B cell (primary cell): ENCODE measurements at regions of chr13 and their contacts with region 1.

Region 1: DNA sequence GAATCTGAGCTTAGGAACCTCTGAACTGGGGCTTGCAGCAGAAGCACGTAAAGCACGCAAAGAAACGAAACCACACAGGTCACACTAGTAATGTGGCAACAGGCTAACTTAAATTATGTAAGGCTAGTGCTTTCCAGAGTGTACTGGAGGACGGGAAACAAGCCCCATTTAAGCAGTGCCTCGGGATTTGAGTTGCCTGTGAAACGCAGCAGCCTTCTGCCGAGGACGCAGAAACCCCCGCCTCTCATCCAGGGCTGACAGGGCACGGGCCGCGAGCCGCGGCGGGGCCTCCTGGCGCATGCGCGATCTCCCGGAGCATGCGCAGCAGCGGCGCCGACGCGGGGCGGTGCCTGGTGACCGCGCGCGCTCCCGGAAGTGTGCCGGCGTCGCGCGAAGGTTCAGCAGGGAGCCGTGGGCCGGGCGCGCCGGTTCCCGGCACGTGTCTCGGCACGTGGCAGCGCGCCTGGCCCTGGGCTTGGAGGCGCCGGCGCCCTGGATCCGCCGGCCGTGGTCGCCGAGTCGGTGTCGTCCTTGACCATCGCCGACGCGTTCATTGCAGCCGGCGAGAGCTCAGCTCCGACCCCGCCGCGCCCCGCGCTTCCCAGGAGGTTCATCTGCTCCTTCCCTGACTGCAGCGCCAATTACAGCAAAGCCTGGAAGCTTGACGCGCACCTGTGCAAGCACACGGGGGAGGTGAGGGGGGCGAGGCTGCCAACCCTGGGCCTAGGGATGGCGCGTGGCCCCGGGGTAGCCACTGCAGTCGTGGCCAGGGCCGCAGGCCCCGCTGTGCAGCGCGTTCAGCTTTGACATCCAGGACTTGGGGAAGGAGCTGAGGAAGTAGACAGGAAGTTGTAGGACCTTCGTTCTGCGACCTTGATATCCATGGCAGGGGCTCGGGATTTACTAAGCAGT is at the start of gene GTF3A:
- DNase-seq: peak; percentile 96
- ATAC-seq: peak; percentile 66
- H3K4me3 ChIP-seq: peak within 1 kb of the TSS; percentile 74 to 97 (median 83)
- H3K4me3 Mint-ChIP-seq: peak within 1 kb of the TSS; percentile 82
- H3K27ac ChIP-seq: peak within 1 kb of the TSS; percentile 78 to 88
- H3K27ac Mint-ChIP-seq: peak within 1 kb of the TSS; percentile 88
- H3K4me1 ChIP-seq: peaks cover 25 to 36% of the 10 kb centered on the region in 2 donors
- H3K4me1 Mint-ChIP-seq: peaks cover 39% of the 10 kb centered on the region
- H3K27me3 ChIP-seq: no peaks in the 10 kb centered on the region
- H3K27me3 Mint-ChIP-seq: no peaks in the 10 kb centered on the region
- CTCF ChIP-seq: no peak
- total RNA-seq, gene GTF3A: 114 and 122 TPM in 2 replicates

Region 2: DNA sequence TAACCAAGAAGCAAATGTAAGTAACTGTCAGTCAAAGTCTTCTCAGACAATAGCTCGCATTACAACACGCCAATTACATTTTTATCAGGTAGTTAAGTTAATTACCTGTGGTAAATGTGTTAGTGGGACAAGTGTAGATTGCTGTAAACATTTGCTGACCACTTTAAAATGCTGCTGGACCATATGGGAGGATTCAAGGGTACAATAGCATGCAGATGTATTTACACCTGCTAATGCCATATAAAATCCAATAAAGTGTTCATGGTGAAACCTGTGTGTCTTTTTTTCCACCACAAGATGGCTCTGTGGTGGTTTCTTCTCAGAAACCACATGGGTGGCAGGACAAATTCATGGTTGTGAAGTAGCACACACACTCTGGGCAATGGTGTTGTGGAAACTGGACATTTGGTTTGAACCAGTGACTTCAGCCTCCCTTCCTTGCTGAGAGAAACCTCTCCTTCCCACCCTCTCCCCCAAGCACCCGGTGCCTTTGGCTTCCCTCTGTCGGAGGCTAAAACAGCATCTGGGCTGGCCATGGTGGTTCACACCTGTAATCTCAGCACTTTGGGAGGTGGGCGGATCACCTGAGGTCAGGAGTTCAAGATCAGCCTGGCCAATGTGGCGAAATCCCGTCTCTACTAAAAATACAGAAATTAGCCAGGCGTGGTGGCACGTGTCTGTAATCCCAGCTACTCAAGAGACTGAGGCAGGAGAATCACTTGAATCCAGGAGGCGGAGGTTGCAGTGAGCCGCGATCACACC is 18.1 kb before region 1 on chr13:
- CTCF ChIA-PET with region 1: interaction called, 22 read pairs
- POLR2A ChIA-PET with region 1: no interaction called
- intact Hi-C with region 1: loop called (anchors 1 kb)
- DNase-seq: peak; percentile 69
- ATAC-seq: peak; percentile 57
- H3K4me3 ChIP-seq: no peak overlapping the region
- H3K4me3 Mint-ChIP-seq: no peak overlapping the region
- H3K27ac ChIP-seq: no peak overlapping the region
- H3K27ac Mint-ChIP-seq: no peak overlapping the region
- H3K4me1 ChIP-seq: peaks cover 7% of the 10 kb centered on the region in 2 donors
- H3K4me1 Mint-ChIP-seq: peaks cover 7% of the 10 kb centered on the region
- H3K27me3 ChIP-seq: peaks cover 0 to 3% (median 0%) of the 10 kb centered on the region in 4 experiments
- H3K27me3 Mint-ChIP-seq: peaks cover 33% of the 10 kb centered on the region
- CTCF ChIP-seq: peak; percentile 68

Region 3: DNA sequence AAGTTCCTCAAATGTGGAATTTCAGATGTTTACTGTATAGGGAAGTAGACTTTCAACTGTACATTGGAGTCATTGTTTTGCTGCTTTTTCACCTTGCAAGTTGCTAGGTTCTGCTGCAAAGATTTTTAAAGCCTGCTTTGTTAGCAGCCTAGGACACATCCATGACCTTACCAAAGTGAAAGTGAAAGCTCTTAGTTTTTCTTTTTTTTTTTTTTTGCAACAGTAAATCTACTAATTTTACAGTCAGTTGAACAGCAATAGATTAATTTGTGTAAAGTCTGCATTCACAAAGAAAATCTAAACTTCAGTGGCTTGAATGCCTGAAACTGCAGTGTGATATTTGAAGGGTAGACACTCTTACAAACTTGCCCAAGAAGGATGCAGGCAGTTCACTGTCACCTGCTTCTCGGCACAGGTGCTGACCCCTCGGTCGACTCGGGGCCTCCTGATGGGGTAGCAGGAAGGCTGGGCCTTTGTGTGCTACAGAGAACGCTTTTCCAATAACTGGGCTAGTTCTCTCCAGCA is 30.9 kb after region 1 on chr13:
- CTCF ChIA-PET with region 1: interaction called, 75 read pairs
- POLR2A ChIA-PET with region 1: interaction called, 106 read pairs
- intact Hi-C with region 1: loop called (anchors 1 kb)
- DNase-seq: peak; percentile 45
- ATAC-seq: no peak
- H3K4me3 ChIP-seq: peak overlapping the region; percentile 8 to 86 (median 56)
- H3K4me3 Mint-ChIP-seq: peak overlapping the region; percentile 94
- H3K27ac ChIP-seq: peak overlapping the region; percentile 49 to 68
- H3K27ac Mint-ChIP-seq: peak overlapping the region; percentile 95
- H3K4me1 ChIP-seq: peaks cover 22% of the 10 kb centered on the region in 2 donors
- H3K4me1 Mint-ChIP-seq: peaks cover 25% of the 10 kb centered on the region
- H3K27me3 ChIP-seq: no peaks in the 10 kb centered on the region
- H3K27me3 Mint-ChIP-seq: no peaks in the 10 kb centered on the region
- CTCF ChIP-seq: no peak

Region 4: DNA sequence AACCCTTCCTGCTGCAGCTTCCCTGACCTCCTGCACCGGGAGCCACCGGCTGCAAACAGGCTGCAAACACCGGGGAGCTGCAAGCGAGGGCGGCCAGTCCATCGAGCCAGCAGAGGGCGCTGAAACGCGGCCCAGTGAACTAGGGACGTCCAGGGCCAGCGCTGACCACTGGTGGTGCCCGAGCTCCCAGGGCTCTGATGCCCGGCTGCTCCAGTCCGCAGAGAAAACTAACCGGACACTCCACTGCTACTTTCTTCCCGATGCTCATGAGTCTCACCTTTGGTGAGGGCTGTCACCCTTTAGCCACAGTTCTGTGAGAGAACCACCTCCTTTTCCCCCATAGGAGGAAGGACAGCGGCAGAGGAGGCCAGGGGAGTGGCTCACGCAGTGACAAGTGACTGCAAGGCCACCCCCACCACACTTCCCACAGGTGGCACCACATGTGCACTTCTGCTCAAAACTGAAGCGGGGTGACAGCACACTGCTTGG is 108.7 kb after region 1 on chr13:
- CTCF ChIA-PET with region 1: interaction called, 9 read pairs
- POLR2A ChIA-PET with region 1: no interaction called
- intact Hi-C with region 1: loop called (anchors 5 kb)
- DNase-seq: peak; percentile 57
- ATAC-seq: peak; percentile 70
- H3K4me3 ChIP-seq: peak overlapping the region in 3 of 5 experiments; percentile 16 to 44 (median 17)
- H3K4me3 Mint-ChIP-seq: peak overlapping the region; percentile 69
- H3K27ac ChIP-seq: no peak overlapping the region
- H3K27ac Mint-ChIP-seq: no peak overlapping the region
- H3K4me1 ChIP-seq: peaks cover 9 to 15% of the 10 kb centered on the region in 2 donors
- H3K4me1 Mint-ChIP-seq: peaks cover 26% of the 10 kb centered on the region
- H3K27me3 ChIP-seq: no peaks in the 10 kb centered on the region
- H3K27me3 Mint-ChIP-seq: no peaks in the 10 kb centered on the region
- CTCF ChIP-seq: peak; percentile 73